ENCODE measurements at regions of chrX and their contacts with region 1.

Region 1: GRCh38 chrX:24371391-24371972 is 11.0 kb downstream of the SUPT20HL1 start:
- DNase-seq: peak; percentile 70
- ATAC-seq: peak; percentile 82
- H3K4me3 Mint-ChIP-seq: peak overlapping the region; percentile 65
- H3K27ac Mint-ChIP-seq: peak overlapping the region; percentile 32
- H3K4me1 Mint-ChIP-seq: peaks cover 26% of the 10 kb centered on the region
- H3K27me3 Mint-ChIP-seq: no peaks in the 10 kb centered on the region

Region 2: DNA sequence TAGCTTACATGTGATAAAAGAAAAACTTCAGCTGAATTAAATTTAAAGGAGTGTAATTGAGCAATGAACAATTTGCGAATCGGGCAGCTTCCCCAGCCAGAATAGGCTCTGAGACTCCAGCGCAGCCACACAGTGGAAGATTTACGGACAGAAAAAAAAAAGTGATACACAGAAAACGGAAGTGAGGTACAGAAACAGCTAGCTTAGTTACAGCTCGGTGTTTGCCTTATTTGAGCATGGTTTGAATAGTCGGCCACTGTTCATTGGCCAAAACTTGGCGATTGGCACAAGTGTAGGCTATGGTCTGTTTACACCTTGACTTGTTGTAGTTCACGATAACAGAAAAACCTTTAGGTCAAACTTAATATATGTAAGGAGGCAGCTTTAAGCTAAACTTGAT is 27.8 kb before region 1 on chrX:
- CTCF ChIA-PET with region 1: no interaction called
- DNase-seq: peak; percentile 40
- ATAC-seq: peak; percentile 75
- H3K4me3 Mint-ChIP-seq: no peak overlapping the region
- H3K27ac Mint-ChIP-seq: peak overlapping the region; percentile 63
- H3K4me1 Mint-ChIP-seq: peaks cover 25% of the 10 kb centered on the region
- H3K27me3 Mint-ChIP-seq: peaks cover 6% of the 10 kb centered on the region

Region 3: GRCh38 chrX:24463077-24463476 is 91.6 kb after region 1 on chrX:
- CTCF ChIA-PET with region 1: no interaction called
- DNase-seq: no peak
- ATAC-seq: no peak
- H3K4me3 Mint-ChIP-seq: no peak overlapping the region
- H3K27ac Mint-ChIP-seq: no peak overlapping the region
- H3K4me1 Mint-ChIP-seq: peaks cover 24% of the 10 kb centered on the region
- H3K27me3 Mint-ChIP-seq: peaks cover 3% of the 10 kb centered on the region

Region 4: GRCh38 chrX:24561121-24561520 is 189.6 kb after region 1 on chrX:
- CTCF ChIA-PET with region 1: interaction called, 12 read pairs
- DNase-seq: no peak
- ATAC-seq: no peak
- H3K4me3 Mint-ChIP-seq: no peak overlapping the region
- H3K27ac Mint-ChIP-seq: no peak overlapping the region
- H3K4me1 Mint-ChIP-seq: no peaks in the 10 kb centered on the region
- H3K27me3 Mint-ChIP-seq: no peaks in the 10 kb centered on the region

Measured in activated CD8-positive, alpha-beta memory T cell treated with anti-CD3 and anti-CD28 coated beads, Interleukin-2, amount 10 ng/mL, durations not matched to agents 7 days and 5 days (primary cell).